Caco-2 (cell line): ENCODE measurements at regions of chr15 and their contacts with region 1.

Region 1: GRCh38 chr15:95784508-95784907 is 546.0 kb upstream of the NR2F2 start:
- DNase-seq: no peak
- H3K4me3 ChIP-seq: no peak overlapping the region
- H3K4me3 Mint-ChIP-seq: no peak overlapping the region
- H3K27ac Mint-ChIP-seq: peak overlapping the region; percentile 59
- H3K4me1 ChIP-seq: peaks cover 9% of the 10 kb centered on the region; the same call in 1 of the 2 replicates
- H3K4me1 Mint-ChIP-seq: peaks cover 7% of the 10 kb centered on the region
- H3K27me3 ChIP-seq: no peaks in the 10 kb centered on the region
- H3K27me3 Mint-ChIP-seq: no peaks in the 10 kb centered on the region
- CTCF ChIP-seq: no peak

Region 2: GRCh38 chr15:95541301-95541700 is 243.2 kb before region 1 on chr15:
- CTCF ChIA-PET with region 1: no interaction called
- POLR2A ChIA-PET with region 1: no interaction called
- intact Hi-C with region 1: no loop called
- DNase-seq: no peak
- H3K4me3 ChIP-seq: no peak overlapping the region
- H3K4me3 Mint-ChIP-seq: no peak overlapping the region
- H3K27ac Mint-ChIP-seq: no peak overlapping the region
- H3K4me1 ChIP-seq: no peaks in the 10 kb centered on the region
- H3K4me1 Mint-ChIP-seq: no peaks in the 10 kb centered on the region
- H3K27me3 ChIP-seq: no peaks in the 10 kb centered on the region
- H3K27me3 Mint-ChIP-seq: peaks cover 3% of the 10 kb centered on the region
- CTCF ChIP-seq: no peak

Region 3: DNA sequence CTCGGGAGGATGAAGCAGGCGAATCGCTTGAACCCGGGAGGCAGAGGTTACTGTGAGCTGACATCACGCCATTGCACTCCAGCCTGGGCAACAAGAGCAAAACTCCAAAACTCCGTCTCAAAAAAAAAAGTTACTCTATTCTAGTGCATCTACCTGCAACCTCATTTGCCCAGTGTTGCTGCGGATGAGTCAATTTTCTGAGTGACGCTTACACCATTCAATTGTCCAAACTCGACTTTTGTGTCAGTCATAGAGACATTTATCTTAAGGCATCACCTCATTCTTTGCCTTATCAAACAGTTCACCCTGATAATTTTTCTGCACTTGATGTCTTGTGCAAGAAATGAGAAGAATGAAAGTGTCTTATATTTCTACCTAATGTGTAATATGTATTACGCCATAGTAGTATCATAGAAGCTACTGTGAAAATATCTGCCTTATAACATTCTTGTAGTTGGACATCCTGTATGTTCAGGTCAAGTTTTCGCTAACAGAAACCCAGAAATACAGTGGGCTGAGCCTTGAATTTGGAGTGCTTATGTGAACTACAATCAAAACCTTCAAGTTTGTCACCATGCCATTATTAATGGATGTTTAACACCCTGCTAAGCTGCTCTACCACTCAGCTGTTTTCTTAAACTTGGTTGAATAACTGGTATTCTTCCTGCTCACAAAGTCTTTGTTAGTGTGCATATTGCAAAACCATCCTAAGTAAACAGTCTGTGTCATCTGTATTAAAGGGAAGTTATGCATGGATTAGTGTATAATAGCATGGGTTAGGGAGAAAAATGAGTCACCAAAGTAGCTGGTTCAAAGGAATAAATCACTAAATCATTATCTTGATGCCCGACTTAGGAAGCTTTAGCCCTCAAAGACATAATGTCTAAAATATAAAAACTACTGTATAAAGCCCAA is 15.0 kb after region 1 on chr15:
- CTCF ChIA-PET with region 1: no interaction called
- POLR2A ChIA-PET with region 1: no interaction called
- intact Hi-C with region 1: loop called (anchors 2 kb)
- DNase-seq: peak in 1 of 2 experiments; percentile 15
- H3K4me3 ChIP-seq: no peak overlapping the region
- H3K4me3 Mint-ChIP-seq: no peak overlapping the region
- H3K27ac Mint-ChIP-seq: no peak overlapping the region
- H3K4me1 ChIP-seq: peaks cover 5% of the 10 kb centered on the region; the same call in 1 of the 2 replicates
- H3K4me1 Mint-ChIP-seq: no peaks in the 10 kb centered on the region
- H3K27me3 ChIP-seq: no peaks in the 10 kb centered on the region
- H3K27me3 Mint-ChIP-seq: no peaks in the 10 kb centered on the region
- CTCF ChIP-seq: no peak